Transverse colon (tissue), 4 donors: ENCODE measurements at regions of chr16 and their contacts with region 1.

Region 1: GRCh38 chr16:25210758-25211157 is 6.0 kb upstream of the AQP8 start:
- DNase-seq: no peak
- H3K4me3 ChIP-seq: no peak overlapping the region
- H3K27ac ChIP-seq: no peak overlapping the region
- H3K4me1 ChIP-seq: peaks cover 0 to 8% (median 3%) of the 10 kb centered on the region in 4 donors
- H3K27me3 ChIP-seq: no peaks in the 10 kb centered on the region
- CTCF ChIP-seq: no peak
- EP300 ChIP-seq: no peak
- POLR2A ChIP-seq: no peak

Region 2: DNA sequence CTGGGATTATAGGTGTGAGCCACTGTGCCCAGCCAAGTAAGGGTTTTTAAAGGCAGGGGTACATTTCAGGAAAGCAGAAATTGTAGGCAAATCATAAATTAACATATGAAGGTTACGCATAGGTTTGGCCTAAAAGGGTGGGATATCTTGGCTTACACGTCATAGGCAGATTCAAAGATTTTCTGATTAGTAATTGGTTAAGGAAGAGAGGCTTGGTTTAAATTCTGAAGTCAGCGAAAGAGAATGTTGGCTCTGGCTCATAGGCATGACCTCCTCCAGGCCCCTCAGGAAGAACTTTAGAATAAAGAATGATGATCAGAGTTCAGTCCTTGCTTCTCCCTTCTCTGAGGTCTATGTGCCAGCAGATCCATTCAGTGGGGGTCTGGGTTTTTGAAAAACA is 796.2 kb before region 1 on chr16:
- in situ Hi-C with region 1: no loop called
- intact Hi-C with region 1: loop called (anchors 5 kb)
- DNase-seq: no peak
- H3K4me3 ChIP-seq: no peak overlapping the region
- H3K27ac ChIP-seq: no peak overlapping the region
- H3K4me1 ChIP-seq: no peaks in the 10 kb centered on the region
- H3K27me3 ChIP-seq: peaks cover 3% of the 10 kb centered on the region
- CTCF ChIP-seq: no peak
- EP300 ChIP-seq: no peak
- POLR2A ChIP-seq: no peak

Region 3: DNA sequence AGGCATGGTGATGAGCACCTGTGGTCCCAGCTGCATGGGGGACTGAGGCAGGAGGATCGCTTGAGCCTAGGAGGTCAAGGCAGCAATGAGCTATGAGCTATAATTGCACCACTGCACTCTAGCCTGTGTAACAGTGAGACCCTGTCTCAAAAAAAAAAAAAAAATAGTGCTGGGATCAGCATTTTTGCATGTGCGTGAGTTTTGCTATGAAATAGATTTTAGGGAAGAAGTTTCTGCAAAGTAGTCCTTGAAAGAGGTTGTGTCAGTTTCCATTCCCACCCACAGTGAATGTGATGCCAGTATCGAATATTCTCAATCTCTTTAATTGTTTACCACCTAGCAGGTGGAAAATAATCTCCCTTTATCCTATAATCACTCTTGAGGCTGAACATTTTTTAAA is 169.3 kb before region 1 on chr16:
- in situ Hi-C with region 1: no loop called
- intact Hi-C with region 1: no loop called
- DNase-seq: no peak
- H3K4me3 ChIP-seq: no peak overlapping the region
- H3K27ac ChIP-seq: no peak overlapping the region
- H3K4me1 ChIP-seq: peaks cover 0 to under 1% (median 0%) of the 10 kb centered on the region in 4 donors
- H3K27me3 ChIP-seq: no peaks in the 10 kb centered on the region
- CTCF ChIP-seq: no peak
- EP300 ChIP-seq: no peak
- POLR2A ChIP-seq: no peak

Region 4: DNA sequence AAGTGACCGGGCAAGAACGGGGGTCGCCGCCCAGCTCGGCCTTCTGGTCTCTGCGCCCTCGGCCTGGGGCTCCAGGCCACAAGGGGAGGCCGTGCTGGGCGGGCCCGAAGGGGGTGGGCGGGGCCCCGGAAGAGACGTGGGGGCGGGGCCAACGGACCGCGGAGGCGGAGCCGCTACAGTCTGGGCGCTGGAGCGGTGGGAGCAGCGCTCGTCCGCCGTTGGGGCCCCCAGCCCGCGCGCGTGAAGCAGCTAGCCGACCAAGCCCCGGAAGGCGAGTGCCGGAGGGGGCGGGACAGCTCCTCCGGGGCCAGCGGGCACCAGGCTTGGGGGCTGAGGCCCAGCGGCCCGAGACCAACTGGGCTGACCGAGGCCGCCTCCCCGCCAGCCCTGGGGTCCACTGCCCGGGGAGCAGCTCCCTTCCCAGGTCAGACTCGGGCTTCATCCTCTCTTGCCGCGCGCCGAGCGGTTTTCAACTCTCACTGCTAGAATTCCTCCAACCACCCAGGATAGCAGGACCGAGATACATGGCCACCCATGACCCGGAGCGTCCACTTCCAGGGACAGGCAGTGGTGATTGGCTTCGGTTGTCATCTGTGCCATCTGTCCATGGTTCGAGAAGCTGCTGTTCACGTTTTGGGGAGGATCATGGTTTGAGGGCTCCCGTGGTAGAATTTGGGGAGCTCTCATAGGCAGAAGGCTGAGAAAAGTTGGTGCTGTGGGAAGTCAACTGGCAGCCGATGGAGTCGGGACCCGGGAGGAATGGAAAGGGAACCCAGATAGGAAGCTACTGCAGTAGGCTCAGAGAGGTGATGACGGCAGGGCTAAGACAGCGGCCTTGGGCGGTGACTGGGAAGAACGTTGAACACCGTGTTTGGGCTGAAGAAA is 143.8 kb before region 1 on chr16:
- in situ Hi-C with region 1: loop called in 1 of 4 experiments (anchors 25 kb)
- intact Hi-C with region 1: no loop called
- DNase-seq: peak; percentile 88
- H3K4me3 ChIP-seq: peak overlapping the region; percentile 77 to 95 (median 87)
- H3K27ac ChIP-seq: peak overlapping the region; percentile 93 to 96 (median 95)
- H3K4me1 ChIP-seq: peaks cover 0 to 16% (median 11%) of the 10 kb centered on the region in 4 donors
- H3K27me3 ChIP-seq: no peaks in the 10 kb centered on the region
- CTCF ChIP-seq: peak in 1 of 5 experiments; percentile 9
- EP300 ChIP-seq: no peak
- POLR2A ChIP-seq: peak; percentile 87